Gastrocnemius medialis (tissue), 4 donors: ENCODE measurements at regions of chr5 and their contacts with region 1.

Region 1: GRCh38 chr5:121949867-121950266 is 11.9 kb upstream of the SRFBP1 start:
- DNase-seq: no peak
- ATAC-seq: no peak
- H3K4me3 ChIP-seq: no peak overlapping the region
- H3K27ac ChIP-seq: no peak overlapping the region
- H3K4me1 ChIP-seq: no peaks in the 10 kb centered on the region
- H3K27me3 ChIP-seq: no peaks in the 10 kb centered on the region
- CTCF ChIP-seq: peak in 4 of 5 experiments; percentile 12 to 55 (median 32)
- POLR2A ChIP-seq: no peak

Region 2: GRCh38 chr5:120655828-120656435 is 1293.9 kb before region 1 on chr5:
- in situ Hi-C with region 1: no loop called
- intact Hi-C with region 1: loop called (anchors 10 kb)
- DNase-seq: no peak
- ATAC-seq: no peak
- H3K4me3 ChIP-seq: no peak overlapping the region
- H3K27ac ChIP-seq: no peak overlapping the region
- H3K4me1 ChIP-seq: no peaks in the 10 kb centered on the region
- H3K27me3 ChIP-seq: no peaks in the 10 kb centered on the region
- CTCF ChIP-seq: no peak
- POLR2A ChIP-seq: no peak

Region 3: DNA sequence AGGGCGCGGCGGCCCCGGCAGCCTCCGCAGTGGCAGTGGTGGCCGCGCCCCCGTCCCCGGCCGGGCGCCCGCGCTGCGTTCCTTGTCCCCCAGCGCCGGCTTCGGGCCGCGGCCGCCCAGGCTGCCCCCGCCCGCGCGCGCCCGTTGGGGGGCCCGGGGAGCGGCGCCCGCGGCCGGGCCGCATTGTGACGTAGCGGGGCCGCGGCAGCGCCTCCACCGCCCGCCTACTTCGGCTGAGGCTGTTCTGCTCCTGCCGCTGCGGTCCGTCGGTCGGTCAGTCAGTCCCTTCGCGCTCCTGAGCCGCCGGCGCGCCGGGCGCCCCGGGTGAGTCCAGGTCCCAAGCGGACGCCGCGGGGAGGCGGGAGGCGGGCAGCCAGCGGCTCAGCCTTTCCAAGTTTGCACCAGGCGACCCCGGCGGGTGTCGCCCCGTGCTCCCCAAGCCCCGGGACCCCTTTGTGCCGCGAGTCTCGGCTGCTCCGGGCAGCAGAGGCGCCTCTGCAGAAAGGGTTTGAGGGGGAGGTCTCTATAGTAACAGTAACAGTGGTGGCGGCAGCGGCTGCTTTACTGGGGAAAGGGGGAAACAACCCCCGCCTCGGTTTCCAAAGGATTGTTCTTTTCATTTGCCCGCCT is 362.2 kb after region 1 on chr5 and contains the start of gene SNCAIP:
- in situ Hi-C with region 1: no loop called
- intact Hi-C with region 1: no loop called
- DNase-seq: no peak
- ATAC-seq: peak in 1 of 2 donors; percentile 42
- H3K4me3 ChIP-seq: peak within 1 kb of the TSS; percentile 51 to 62 (median 57)
- H3K27ac ChIP-seq: peak within 1 kb of the TSS in 1 of 4 donors; percentile 4
- H3K4me1 ChIP-seq: peaks cover 0 to 9% of the 10 kb centered on the region in 2 donors
- H3K27me3 ChIP-seq: peaks cover 12 to 42% (median 29%) of the 10 kb centered on the region in 3 donors
- CTCF ChIP-seq: no peak
- POLR2A ChIP-seq: no peak
- total RNA-seq, gene SNCAIP: 0.22 to 3.1 (median 0.53) TPM